Heart left ventricle (tissue), 16 donors: ENCODE measurements at regions of chr21 and their contacts with region 1.

Region 1: GRCh38 chr21:28633839-28634555 is 358.7 kb downstream of the LTN1 start:
- DNase-seq: peak; percentile 63 to 82 (median 64)
- ATAC-seq: peak; percentile 84 to 94 (median 92)
- H3K4me3 ChIP-seq: no peak overlapping the region
- H3K27ac ChIP-seq: peak overlapping the region; percentile 37 to 85 (median 77)
- H3K4me1 ChIP-seq: peaks cover 0 to 35% (median 27%) of the 10 kb centered on the region in 12 donors
- H3K27me3 ChIP-seq: no peaks in the 10 kb centered on the region
- CTCF ChIP-seq: no peak
- POLR2A ChIP-seq: no peak

Region 2: GRCh38 chr21:28522014-28522799 is 111.8 kb before region 1 on chr21:
- intact Hi-C with region 1: loop called in 6 of 10 experiments (anchors 2 to 10 kb)
- DNase-seq: no peak
- ATAC-seq: peak; percentile 41 to 90 (median 72)
- H3K4me3 ChIP-seq: no peak overlapping the region
- H3K27ac ChIP-seq: peak overlapping the region; percentile 6 to 80 (median 56)
- H3K4me1 ChIP-seq: peaks cover 0 to 16% (median 11%) of the 10 kb centered on the region in 12 donors
- H3K27me3 ChIP-seq: no peaks in the 10 kb centered on the region
- CTCF ChIP-seq: peak in 9 of 12 donors; percentile 20 to 48 (median 31)
- POLR2A ChIP-seq: no peak

Region 3: DNA sequence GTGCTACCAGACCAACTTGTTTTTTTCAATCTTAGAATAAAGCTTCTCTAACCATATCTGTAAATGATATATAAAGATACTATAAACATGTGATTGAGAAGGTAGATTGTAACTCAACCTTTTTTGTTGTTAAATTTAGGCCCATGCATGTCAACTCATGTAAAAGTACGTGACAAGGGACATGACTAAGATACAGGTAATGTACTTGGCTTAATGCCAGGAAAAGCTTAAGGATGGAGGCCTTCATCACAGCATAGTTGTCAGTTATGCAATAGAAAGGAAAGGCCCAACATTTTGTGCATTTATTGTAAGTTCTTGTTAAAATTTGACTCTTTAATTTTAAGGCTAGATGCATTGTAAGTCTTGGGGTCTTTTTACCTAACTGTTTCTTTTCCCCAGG is 53.6 kb after region 1 on chr21:
- intact Hi-C with region 1: no loop called
- DNase-seq: no peak
- ATAC-seq: no peak
- H3K4me3 ChIP-seq: no peak overlapping the region
- H3K27ac ChIP-seq: no peak overlapping the region
- H3K4me1 ChIP-seq: no peaks in the 10 kb centered on the region
- H3K27me3 ChIP-seq: no peaks in the 10 kb centered on the region
- CTCF ChIP-seq: no peak
- POLR2A ChIP-seq: no peak

Region 4: GRCh38 chr21:28725396-28725795 is 91.4 kb after region 1 on chr21:
- intact Hi-C with region 1: loop called in 3 of 10 experiments (anchors 5 to 10 kb)
- DNase-seq: no peak
- ATAC-seq: no peak
- H3K4me3 ChIP-seq: no peak overlapping the region
- H3K27ac ChIP-seq: no peak overlapping the region
- H3K4me1 ChIP-seq: peaks cover 0 to 20% (median 4%) of the 10 kb centered on the region in 12 donors
- H3K27me3 ChIP-seq: no peaks in the 10 kb centered on the region
- CTCF ChIP-seq: no peak
- POLR2A ChIP-seq: no peak

Region 5: DNA sequence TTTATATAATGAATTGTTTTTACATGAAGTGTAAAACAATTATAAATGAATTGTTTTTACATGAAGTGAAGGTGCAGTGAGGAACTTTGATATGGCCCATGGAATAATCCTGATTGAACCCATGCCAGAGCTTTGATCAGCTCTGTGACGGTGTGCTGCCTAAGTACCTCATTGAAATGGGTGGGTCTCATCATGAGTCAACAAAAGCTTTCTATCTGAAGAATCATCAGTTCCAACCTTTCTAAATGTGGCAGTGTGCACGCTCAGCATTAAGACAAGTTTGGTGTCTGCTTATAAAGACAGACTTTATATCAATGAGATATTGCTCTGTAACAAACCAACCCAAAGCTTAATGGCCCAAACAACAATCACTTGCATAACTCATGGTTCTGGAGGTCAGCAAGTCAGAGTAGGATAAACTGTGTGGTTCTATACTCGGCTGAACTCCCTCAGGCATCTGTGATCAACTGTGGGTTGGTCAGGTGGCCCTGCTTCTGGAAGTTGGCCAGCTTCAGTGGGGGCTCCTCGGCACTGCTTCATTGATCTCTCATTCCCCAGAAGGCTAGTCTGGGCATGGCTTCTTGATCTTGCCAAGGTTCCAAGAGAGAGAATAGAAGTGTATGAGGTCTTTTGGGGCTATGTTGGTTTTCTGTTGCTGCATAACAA is 100.6 kb after region 1 on chr21:
- intact Hi-C with region 1: loop called in 3 of 10 experiments (anchors 5 to 10 kb)
- DNase-seq: no peak
- ATAC-seq: no peak
- H3K4me3 ChIP-seq: no peak overlapping the region
- H3K27ac ChIP-seq: no peak overlapping the region
- H3K4me1 ChIP-seq: peaks cover 0 to 33% (median 17%) of the 10 kb centered on the region in 12 donors
- H3K27me3 ChIP-seq: no peaks in the 10 kb centered on the region
- CTCF ChIP-seq: no peak
- POLR2A ChIP-seq: no peak